ENCODE measurements at regions of chr3 and their contacts with region 1.

Region 1: GRCh38 chr3:142929109-142929508 is 34.4 kb downstream of the PAQR9 start:
- DNase-seq: no peak
- ATAC-seq: peak; percentile 92
- H3K4me3 ChIP-seq: no peak overlapping the region
- H3K27ac ChIP-seq: no peak overlapping the region
- H3K4me1 ChIP-seq: no peaks in the 10 kb centered on the region
- H3K27me3 ChIP-seq: no peaks in the 10 kb centered on the region
- CTCF ChIP-seq: peak; percentile 60 to 67 (median 63); a peak in 5 of 6 replicates
- EP300 ChIP-seq: no peak
- POLR2A ChIP-seq: no peak
- RAD21 ChIP-seq: peak; percentile 65

Region 2: DNA sequence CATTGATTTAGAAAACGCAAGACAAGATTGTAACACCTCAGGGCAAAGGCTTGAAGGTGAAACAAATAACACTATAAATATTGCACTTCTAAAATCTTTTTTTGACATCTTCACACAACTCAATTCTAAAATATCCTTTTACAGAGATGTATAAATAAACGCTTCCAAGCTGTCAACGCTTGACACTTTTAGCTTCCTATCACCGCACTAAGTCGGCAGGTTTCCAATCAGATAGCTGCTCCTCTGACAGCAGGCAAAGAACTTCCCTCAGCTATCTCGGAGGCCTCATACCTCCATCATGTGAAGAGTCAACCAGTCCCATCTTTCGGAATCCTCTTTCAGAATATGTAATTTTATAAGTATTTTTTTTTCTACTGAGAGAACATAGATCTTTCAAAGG is 111.2 kb before region 1 on chr3:
- CTCF ChIA-PET with region 1: no interaction called
- POLR2A ChIA-PET with region 1: no interaction called
- RAD21 ChIA-PET with region 1: no interaction called
- SMC1A ChIA-PET with region 1: no interaction called
- in situ Hi-C with region 1: no loop called
- intact Hi-C with region 1: no loop called
- DNase-seq: no peak
- ATAC-seq: no peak
- H3K4me3 ChIP-seq: no peak overlapping the region
- H3K27ac ChIP-seq: no peak overlapping the region
- H3K4me1 ChIP-seq: no peaks in the 10 kb centered on the region
- H3K27me3 ChIP-seq: no peaks in the 10 kb centered on the region; a peak in 2 of 4 replicates
- CTCF ChIP-seq: no peak
- EP300 ChIP-seq: no peak
- POLR2A ChIP-seq: no peak
- RAD21 ChIP-seq: no peak

Region 3: DNA sequence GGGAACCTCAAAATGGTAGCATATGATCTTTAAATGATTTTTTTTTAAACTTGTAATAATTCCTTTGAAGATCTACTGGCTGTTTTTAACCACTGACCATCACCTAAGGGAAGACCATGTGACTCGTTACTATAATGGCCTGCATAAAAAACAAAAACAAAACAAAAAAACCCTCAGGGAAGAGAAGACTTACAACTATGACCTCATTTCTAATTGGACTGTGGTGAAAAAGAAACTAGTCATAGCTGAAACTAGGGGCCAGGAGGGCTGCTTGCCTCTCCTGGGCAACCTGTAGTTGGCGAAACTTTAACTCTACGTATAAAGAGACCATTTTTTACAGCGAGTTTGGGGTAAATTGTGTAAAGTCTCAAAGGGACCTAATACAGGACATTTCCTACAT is 11.4 kb after region 1 on chr3:
- CTCF ChIA-PET with region 1: interaction called, 18 read pairs
- POLR2A ChIA-PET with region 1: interaction called, 3 read pairs
- RAD21 ChIA-PET with region 1: no interaction called
- SMC1A ChIA-PET with region 1: interaction called, 5 read pairs
- in situ Hi-C with region 1: no loop called
- intact Hi-C with region 1: no loop called
- DNase-seq: no peak
- ATAC-seq: peak; percentile 90
- H3K4me3 ChIP-seq: no peak overlapping the region
- H3K27ac ChIP-seq: no peak overlapping the region
- H3K4me1 ChIP-seq: no peaks in the 10 kb centered on the region; the same call in 1 of the 2 replicates
- H3K27me3 ChIP-seq: peaks cover 0 to 2% of the 10 kb centered on the region in 2 experiments; a peak in 1 of 4 replicates
- CTCF ChIP-seq: no peak
- EP300 ChIP-seq: no peak
- POLR2A ChIP-seq: no peak
- RAD21 ChIP-seq: no peak

Region 4: GRCh38 chr3:142987080-142987700 is 58.1 kb after region 1 on chr3:
- CTCF ChIA-PET with region 1: interaction called, 25 read pairs
- POLR2A ChIA-PET with region 1: interaction called, 3 read pairs
- RAD21 ChIA-PET with region 1: interaction called, 15 read pairs
- SMC1A ChIA-PET with region 1: interaction called, 4 read pairs
- in situ Hi-C with region 1: loop called (anchors 5 kb)
- intact Hi-C with region 1: loop called (anchors 2 kb)
- DNase-seq: no peak
- ATAC-seq: peak; percentile 72
- H3K4me3 ChIP-seq: no peak overlapping the region
- H3K27ac ChIP-seq: no peak overlapping the region
- H3K4me1 ChIP-seq: 0 out of 2 replicates have a peak, but pooled peaks cover 3% of the 10 kb centered on the region
- H3K27me3 ChIP-seq: no peaks in the 10 kb centered on the region
- CTCF ChIP-seq: peak; percentile 49 to 61 (median 56); a peak in 5 of 6 replicates
- EP300 ChIP-seq: no peak
- POLR2A ChIP-seq: no peak
- RAD21 ChIP-seq: peak; percentile 63

Region 5: GRCh38 chr3:142993958-142994442 is 64.9 kb after region 1 on chr3:
- CTCF ChIA-PET with region 1: interaction called, 15 read pairs
- POLR2A ChIA-PET with region 1: interaction called, 3 read pairs
- RAD21 ChIA-PET with region 1: interaction called, 5 read pairs
- SMC1A ChIA-PET with region 1: interaction called, 10 read pairs
- in situ Hi-C with region 1: loop called (anchors 5 kb)
- intact Hi-C with region 1: loop called (anchors 1 kb)
- DNase-seq: no peak
- ATAC-seq: peak; percentile 81
- H3K4me3 ChIP-seq: no peak overlapping the region
- H3K27ac ChIP-seq: no peak overlapping the region
- H3K4me1 ChIP-seq: 0 out of 2 replicates have a peak, but pooled peaks cover 3% of the 10 kb centered on the region
- H3K27me3 ChIP-seq: no peaks in the 10 kb centered on the region
- CTCF ChIP-seq: peak; percentile 68 to 83 (median 75)
- EP300 ChIP-seq: no peak
- POLR2A ChIP-seq: no peak
- RAD21 ChIP-seq: peak; percentile 83